AG04449 (cell line): ENCODE measurements at regions of chr1 and their contacts with region 1.

Region 1: DNA sequence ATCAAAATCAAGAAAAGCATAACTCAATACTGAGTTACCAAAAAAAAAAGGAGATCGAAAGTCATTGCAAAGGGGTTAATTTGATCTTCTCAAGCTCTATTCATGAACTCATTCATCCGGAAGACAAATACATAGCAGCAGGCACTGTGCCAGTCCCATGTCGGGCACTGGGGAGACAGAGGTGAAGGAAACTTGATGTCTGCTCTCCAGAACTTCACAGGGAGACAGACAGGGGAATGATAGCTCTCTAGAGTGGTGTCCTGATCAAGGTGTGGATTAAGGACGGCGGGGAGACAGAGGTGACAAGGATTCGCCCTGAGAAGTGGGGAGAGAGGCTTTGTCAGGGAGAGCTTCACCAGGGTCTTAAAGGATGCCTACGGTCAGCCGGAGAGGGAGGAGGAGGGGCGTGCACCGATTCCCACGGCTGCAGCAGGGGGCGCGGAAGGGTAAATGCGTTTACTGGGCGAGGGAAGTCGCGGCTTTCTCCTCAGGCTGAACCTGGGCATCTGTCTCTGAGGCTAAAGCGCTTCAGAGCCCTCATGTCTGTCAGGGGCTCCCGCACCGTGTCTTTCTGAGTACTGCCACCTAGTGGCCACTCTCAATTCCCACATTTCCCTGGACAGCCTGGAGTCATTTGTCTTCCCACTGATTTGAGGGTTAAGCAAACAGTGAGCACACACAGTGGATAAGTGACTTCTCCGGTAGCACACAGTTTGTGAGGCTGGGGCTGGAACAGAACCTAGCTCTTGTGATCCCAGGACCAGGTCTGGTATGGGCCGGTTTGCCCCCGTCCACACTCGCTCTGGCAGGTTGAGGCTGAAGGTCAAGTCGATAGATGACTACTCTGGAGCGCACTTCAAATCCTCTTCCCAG is 152.8 kb downstream of the TENT5C start:
- DNase-seq: no peak
- H3K4me3 ChIP-seq: peak overlapping the region; percentile 60
- CTCF ChIP-seq: peak; percentile 69

Region 2: DNA sequence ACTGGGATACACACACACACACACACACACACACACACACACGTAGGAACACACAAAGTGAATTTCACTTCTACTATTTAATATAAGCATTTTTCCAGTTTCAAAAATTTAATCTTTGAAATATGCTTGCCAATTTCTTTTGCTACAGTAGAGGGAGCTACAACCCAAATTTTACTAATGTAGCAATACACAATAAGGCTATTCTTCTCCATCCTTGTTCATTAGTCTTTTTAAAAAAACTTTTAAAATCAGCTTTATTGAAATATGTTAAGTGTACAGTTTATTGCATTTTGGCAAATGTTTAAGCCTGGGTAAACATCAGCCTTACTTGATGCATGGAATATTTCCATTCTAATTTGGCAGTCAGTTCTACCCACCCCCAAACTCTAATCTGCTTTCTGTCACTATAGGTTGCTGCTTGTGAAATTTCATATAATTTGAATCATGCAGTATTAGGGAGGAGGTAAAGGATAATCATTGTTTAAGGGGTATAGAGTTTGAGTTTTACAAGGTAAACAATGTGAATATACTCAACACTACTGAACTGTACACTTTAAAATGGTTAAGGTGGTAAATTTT is 245.8 kb before region 1 on chr1:
- CTCF ChIA-PET with region 1: interaction called, 311 read pairs
- POLR2A ChIA-PET with region 1: no interaction called
- DNase-seq: no peak
- H3K4me3 ChIP-seq: no peak overlapping the region
- CTCF ChIP-seq: peak; percentile 19

Region 3: DNA sequence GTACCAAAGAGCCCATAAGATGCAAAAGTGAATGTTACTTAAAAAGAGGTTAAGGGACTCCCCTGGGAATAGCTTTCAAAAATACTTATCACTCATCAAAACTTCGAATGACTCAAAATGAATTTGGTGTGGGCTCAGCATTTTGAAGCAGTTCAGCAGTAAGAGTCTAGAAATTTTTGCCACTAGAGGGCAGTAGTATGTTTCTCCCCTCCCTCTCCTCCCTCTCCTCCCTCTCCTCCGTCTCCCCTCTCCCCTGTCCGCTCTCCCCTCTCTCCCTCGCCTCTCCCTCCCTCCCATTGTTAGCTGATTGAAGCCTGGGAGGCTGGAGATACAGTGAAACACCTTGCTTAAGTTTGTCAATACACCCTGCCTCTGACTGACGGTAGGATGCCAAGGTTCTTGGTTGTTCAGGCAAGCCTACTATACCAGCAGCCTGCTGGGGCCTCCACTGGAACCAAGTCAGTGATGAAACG is 223.6 kb before region 1 on chr1:
- CTCF ChIA-PET with region 1: interaction called, 209 read pairs
- POLR2A ChIA-PET with region 1: no interaction called
- DNase-seq: no peak
- H3K4me3 ChIP-seq: no peak overlapping the region; the same call in 1 of the 2 replicates
- CTCF ChIP-seq: peak; percentile 65

Region 4: DNA sequence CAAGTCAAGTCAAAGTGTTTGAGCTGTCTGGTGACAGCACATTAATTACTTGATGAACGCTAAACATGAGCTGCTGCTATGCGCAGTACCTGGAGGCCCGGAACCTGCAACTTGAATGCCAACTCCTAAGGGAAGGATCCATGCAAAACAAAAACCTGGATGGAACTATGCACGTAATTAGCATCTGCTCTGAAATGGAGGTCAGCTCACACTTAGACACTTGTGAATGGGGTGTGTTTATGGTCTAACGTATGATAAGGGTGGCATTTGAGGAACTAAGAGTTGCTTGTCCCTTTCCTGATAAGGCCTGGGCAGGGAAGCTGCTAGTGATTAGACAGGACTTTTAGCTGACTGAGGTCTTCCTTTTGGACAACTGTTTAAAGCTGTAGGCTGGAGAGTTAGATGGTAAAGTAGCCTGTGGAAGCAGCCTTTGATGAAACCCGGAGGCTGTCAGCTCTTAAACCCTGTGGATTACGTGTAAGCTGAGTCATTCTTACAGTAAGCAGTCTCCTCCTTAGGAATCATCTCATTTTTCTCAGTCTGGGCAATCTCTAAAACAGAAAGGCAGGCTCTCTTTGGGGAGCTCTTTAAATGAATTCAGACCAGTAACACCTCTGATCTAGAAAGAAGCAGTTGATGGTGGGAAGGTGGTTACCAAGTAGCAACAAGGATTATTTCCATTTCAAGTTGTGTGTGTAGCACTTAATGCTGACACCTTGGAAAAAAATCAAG is 146.0 kb before region 1 on chr1:
- CTCF ChIA-PET with region 1: interaction called, 10 read pairs
- POLR2A ChIA-PET with region 1: no interaction called
- DNase-seq: peak; percentile 24
- H3K4me3 ChIP-seq: no peak overlapping the region
- CTCF ChIP-seq: no peak

Region 5: GRCh38 chr1:117710710-117711109 is 48.0 kb before region 1 on chr1:
- CTCF ChIA-PET with region 1: interaction called, 15 read pairs
- POLR2A ChIA-PET with region 1: no interaction called
- DNase-seq: no peak
- H3K4me3 ChIP-seq: no peak overlapping the region
- CTCF ChIP-seq: peak; percentile 27

Region 6: DNA sequence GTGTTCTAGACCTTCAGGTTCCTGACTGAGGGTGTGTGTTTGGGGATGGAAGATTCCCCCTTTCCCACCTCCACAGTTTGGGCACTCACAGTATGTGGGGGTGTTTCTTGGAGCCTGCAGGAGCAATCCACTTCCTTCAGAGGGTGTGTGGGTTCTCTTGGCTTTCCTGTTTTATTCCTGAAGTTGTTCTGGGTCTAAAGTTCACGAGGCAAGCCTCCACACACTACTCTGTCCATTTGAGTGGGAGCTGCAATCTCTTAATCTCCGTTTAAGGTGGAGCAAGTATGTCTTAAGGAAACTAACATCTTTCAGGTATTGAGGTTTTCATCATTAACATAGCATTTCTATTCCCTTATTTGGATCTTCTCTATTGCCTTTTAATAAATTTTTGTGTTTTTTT is 11.1 kb before region 1 on chr1:
- CTCF ChIA-PET with region 1: interaction called, 13 read pairs
- POLR2A ChIA-PET with region 1: no interaction called
- DNase-seq: no peak
- H3K4me3 ChIP-seq: no peak overlapping the region
- CTCF ChIP-seq: no peak

Region 7: GRCh38 chr1:117795190-117795589 is 36.5 kb after region 1 on chr1:
- CTCF ChIA-PET with region 1: interaction called, 32 read pairs
- POLR2A ChIA-PET with region 1: no interaction called
- DNase-seq: peak; percentile 36
- H3K4me3 ChIP-seq: no peak overlapping the region
- CTCF ChIP-seq: peak; percentile 8